Activated CD4-positive, alpha-beta memory T cell treated with anti-CD3 and anti-CD28 coated beads for 36 hours (primary cell): ENCODE measurements at regions of chr10 and their contacts with region 1.

Region 1: DNA sequence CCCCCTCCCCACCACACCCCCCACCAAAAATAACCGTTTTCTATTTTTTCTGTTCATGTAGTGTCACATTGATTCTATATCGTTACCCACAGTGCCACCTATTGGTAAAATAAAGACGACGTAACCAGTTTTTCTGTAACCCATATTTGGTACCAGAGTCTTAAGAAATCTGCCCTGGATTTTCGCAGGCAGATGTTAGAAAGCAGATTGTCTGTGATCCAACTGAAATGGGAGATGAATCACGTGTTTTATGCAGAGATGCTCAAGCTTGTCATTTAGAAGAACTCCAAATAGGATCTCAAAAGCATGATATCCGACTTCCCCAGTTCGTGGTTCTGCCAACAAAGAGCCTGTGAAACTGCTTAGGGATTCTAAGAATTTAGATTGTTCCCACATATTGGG is 261.1 kb upstream of the CSTF2T start:
- DNase-seq: no peak
- H3K4me3 Mint-ChIP-seq: no peak overlapping the region
- H3K27ac Mint-ChIP-seq: no peak overlapping the region
- H3K4me1 Mint-ChIP-seq: no peaks in the 10 kb centered on the region
- H3K27me3 Mint-ChIP-seq: peaks cover 14% of the 10 kb centered on the region

Region 2: GRCh38 chr10:51010977-51011376 is 949.5 kb before region 1 on chr10:
- CTCF ChIA-PET with region 1: interaction called, 7 read pairs
- POLR2A ChIA-PET with region 1: no interaction called
- intact Hi-C with region 1: loop called (anchors 2 kb)
- DNase-seq: peak; percentile 12
- H3K4me3 Mint-ChIP-seq: no peak overlapping the region
- H3K27ac Mint-ChIP-seq: no peak overlapping the region
- H3K4me1 Mint-ChIP-seq: no peaks in the 10 kb centered on the region
- H3K27me3 Mint-ChIP-seq: peaks cover 14% of the 10 kb centered on the region

Region 3: DNA sequence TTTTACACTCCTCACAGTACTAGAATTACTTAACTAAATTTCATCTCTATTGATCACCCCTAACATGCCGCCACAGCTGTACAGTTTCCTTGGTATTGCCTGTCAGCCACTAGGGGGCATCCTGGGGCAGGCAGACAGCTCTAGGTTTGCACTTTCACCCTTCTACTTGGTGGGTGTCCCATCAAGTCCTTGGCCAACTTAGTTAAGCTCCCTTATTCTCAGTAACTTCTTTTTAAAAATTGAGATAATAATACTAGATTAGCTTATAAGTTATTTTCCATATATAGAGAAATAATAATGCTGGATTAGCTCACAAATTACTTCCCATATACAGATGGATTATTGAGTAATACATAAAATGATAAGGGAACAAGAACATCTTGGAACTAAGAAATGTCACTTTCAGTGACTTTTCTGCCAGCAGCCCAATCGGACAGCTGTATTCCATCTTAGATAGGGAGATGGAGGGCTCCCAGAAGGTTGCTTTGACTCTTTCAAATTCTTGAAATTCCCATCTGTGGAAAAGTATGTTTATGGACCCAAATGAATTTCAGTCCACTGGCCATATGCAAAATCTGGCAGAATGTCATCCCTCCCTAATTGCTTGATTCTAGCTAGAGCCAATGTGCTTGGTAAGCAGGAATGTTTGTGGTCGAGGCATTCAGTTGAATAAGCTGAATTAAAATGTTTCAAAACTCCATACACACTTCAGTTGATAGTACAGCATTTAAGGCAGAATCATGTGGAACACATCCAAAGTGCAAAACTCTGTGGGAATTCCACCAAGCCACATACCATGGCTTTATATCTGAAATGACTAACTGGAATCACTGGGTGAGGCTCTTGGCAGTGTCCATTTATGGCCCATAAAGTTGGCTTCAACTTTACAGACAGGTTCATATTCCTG is 570.8 kb before region 1 on chr10:
- CTCF ChIA-PET with region 1: interaction called, 45 read pairs
- POLR2A ChIA-PET with region 1: no interaction called
- intact Hi-C with region 1: loop called (anchors 1 kb)
- DNase-seq: peak; percentile 55
- H3K4me3 Mint-ChIP-seq: no peak overlapping the region
- H3K27ac Mint-ChIP-seq: no peak overlapping the region
- H3K4me1 Mint-ChIP-seq: no peaks in the 10 kb centered on the region
- H3K27me3 Mint-ChIP-seq: no peaks in the 10 kb centered on the region

Region 4: DNA sequence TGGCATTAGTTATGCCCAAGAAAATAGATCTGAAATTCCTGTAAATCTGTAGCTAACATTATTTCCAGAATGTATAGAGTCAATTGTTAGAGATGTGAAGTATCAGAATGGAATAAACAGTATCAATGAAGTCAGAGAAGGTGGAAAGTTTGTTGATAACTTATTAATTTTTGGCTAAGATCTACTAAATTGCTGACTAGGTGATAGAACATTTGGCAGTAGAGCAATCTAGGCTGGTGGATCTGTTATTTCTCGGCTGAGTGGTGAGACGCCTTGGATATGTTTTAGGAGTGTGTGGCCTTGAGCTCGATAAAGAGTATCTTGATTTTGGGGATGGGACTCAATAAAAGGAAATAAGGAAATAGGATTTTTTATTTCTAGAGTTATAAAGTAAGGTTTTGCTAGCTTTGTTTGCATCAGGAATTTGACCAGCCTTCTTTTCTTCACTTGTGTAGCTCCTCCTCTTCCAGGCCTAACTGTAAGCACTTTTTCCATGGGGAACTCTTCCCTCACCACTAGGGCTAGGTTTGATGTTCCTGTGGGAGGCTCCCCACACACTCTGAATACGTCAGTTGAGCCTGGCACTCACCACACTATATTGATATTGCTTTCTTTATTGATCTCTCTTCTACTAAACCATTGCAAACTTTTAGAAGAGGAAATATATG is 174.3 kb before region 1 on chr10:
- CTCF ChIA-PET with region 1: no interaction called
- POLR2A ChIA-PET with region 1: no interaction called
- intact Hi-C with region 1: no loop called
- DNase-seq: no peak
- H3K4me3 Mint-ChIP-seq: no peak overlapping the region
- H3K27ac Mint-ChIP-seq: no peak overlapping the region
- H3K4me1 Mint-ChIP-seq: no peaks in the 10 kb centered on the region
- H3K27me3 Mint-ChIP-seq: no peaks in the 10 kb centered on the region

Region 5: DNA sequence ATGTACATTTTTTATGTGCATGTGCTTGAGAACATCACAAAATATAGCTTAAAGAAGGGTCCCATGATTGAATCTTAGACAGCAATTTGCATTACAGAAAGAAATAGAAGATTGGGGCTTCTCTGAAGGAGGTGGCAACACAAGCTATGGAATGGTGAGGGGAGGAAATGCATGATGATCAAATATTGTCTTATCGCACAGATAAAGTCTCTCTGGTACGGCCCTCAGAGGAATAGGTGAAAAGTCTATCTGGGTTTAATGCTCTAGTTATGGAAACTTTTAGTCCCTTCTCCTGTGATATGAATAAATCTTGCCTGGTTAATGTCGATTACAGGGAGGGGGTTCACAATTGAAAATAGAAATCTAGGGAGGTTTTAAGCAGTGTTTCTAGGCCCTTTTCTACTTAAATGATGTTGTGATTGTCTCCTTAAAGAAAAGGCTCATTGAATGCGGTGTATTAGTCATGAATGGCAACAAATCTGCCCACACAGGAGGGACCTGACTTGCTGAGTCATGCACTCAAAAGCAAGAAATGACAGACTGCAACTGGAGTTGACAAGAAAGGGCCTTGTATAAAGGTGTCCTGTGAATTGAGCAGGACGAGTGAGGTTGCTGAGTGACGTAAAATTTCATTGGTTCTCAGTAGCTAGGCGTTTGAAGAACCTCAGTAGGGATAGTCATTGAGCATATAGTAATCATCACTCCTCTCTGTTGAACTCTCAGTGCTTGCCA is 127.7 kb before region 1 on chr10:
- CTCF ChIA-PET with region 1: no interaction called
- POLR2A ChIA-PET with region 1: no interaction called
- intact Hi-C with region 1: no loop called
- DNase-seq: peak; percentile 55
- H3K4me3 Mint-ChIP-seq: no peak overlapping the region
- H3K27ac Mint-ChIP-seq: no peak overlapping the region
- H3K4me1 Mint-ChIP-seq: peaks cover 4% of the 10 kb centered on the region
- H3K27me3 Mint-ChIP-seq: no peaks in the 10 kb centered on the region